ENCODE measurements at regions of chr17 and their contacts with region 1.

Region 1: GRCh38 chr17:78421484-78422266 is 43.2 kb downstream of the PGS1 start:
- DNase-seq: peak; percentile 14
- H3K4me3 ChIP-seq: no peak overlapping the region
- CTCF ChIP-seq: peak; percentile 99

Region 2: DNA sequence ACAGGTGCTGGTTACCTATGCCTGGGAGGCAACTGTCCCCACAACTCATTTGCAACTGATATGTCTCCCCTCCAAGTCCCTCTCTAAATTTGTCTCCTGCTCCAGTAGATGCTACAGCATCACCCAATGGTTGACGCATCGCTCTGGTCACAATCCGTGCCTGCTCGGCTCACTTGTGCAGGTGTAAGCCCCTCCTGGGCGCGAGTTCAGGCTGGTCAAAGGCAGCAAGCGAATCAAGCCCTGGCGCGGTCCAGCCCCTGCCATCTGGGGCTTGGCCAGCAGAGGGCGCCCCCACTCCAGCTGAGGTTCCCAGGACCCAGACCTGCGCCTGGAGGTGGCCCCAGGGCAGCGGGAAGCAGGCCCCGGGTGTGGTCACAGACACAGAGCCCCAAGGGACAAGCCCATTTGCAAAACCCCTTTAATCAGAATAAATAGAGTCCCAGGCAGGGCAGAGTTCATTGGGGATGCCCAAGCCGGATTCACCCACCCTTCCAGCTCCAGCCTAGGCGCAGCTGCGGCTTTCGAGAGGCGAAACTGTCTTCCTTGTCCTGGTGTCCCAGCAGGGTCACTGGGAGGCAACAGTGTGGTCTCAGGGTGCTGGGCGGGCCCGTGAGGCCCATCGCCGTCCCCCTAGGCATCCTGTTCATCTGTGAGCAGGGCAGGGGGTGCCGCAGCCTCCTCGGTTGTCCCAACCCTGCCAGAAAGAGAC is 309.0 kb before region 1 on chr17:
- CTCF ChIA-PET with region 1: interaction called, 11 read pairs
- POLR2A ChIA-PET with region 1: no interaction called
- DNase-seq: no peak
- H3K4me3 ChIP-seq: no peak overlapping the region
- CTCF ChIP-seq: peak; percentile 99

Region 3: GRCh38 chr17:78197147-78197832 is 224.4 kb before region 1 on chr17:
- CTCF ChIA-PET with region 1: no interaction called
- POLR2A ChIA-PET with region 1: no interaction called
- DNase-seq: no peak
- H3K4me3 ChIP-seq: no peak overlapping the region
- CTCF ChIP-seq: no peak

Region 4: DNA sequence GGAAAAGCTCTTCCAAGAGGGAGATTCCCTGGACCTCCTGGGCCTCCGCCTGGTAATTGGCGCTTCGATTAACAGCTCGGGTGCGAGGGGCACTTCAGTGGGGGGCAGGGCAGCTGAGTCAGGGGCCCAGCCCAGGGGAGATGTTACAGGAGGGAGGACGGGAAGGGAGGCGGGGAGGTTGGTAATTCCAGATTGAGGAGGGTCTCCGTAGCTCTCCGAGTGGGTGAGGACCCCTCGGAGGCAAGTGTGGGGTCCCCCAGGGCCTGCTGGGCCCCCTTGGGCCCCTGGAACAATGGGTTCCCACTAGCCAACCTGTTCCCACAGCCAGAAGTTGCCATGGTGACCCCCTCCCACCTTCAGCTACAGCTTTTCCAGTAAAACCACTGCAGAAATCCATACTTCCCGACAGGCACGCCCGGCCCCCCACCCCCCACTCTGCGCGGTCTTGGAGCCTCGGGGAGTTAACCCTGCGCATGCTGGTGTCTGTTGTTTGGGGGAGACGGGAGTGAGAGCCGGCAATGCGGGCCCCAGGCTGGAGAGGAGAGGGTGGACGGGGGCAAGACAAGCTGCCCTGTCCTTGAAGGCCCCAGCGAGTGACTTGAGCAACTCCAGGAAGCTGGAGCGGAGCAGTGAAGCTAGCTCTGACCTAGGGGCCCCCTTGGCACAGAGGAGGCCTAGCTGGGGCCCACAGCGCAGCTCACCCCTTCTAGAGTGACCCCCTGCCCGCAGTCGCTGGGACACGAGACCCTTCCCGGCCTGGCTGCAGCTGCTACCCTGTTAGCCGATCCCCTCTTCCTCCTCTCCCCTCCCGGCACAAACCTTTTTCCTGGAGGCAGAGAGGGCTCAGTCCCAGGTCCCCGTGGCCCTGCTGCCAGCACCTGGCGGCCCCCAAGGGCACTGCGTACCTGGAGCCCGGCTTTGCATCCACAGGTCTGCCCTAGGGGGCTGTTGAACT is 152.4 kb before region 1 on chr17:
- CTCF ChIA-PET with region 1: interaction called, 14 read pairs
- POLR2A ChIA-PET with region 1: no interaction called
- DNase-seq: no peak
- H3K4me3 ChIP-seq: no peak overlapping the region
- CTCF ChIP-seq: no peak

Region 5: GRCh38 chr17:78378225-78379130 is 43.2 kb before region 1 on chr17 and contains the start of gene PGS1:
- CTCF ChIA-PET with region 1: interaction called, 32 read pairs
- POLR2A ChIA-PET with region 1: no interaction called
- DNase-seq: no peak
- H3K4me3 ChIP-seq: peak within 1 kb of the TSS; percentile 81
- CTCF ChIP-seq: no peak

Region 6: DNA sequence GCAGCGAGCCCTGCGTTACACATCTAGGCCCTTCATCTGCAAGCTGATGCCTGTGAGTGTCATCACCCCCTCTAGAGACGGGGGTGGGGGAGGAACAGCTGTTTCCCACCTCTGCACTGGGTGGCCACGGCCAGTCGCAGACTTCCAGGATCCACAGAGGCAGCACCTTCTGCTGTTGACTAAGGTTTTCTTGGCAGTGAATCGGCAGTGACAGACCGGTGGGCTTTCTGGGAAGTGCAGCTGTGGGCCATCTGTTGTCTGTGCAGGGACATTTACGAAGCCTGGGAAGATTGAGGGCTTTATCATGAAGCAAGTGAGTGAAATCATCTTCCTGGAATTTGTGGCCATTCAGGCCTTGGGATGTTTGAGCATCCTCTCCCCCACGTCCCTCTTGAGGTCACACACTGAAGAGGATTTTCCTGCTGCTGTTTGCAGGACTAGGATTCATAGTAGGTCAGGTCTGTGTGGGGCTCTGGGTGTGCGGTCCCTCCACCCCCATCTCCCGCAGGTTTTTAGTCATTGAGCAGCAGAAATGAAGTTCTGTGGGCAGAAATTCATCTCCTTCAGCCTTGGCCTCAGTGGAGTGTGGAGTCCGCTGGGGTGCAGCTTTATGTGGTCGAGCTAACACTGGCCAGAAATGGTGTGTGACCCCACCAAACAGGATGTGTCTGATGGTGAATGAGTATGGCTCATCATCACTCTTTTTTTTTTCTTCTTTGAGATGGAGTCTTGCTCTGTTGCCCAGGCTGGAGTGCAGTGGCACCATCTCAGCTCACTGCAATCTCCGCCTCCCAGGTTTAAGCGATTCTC is 31.2 kb before region 1 on chr17:
- CTCF ChIA-PET with region 1: interaction called, 19 read pairs
- POLR2A ChIA-PET with region 1: no interaction called
- DNase-seq: peak; percentile 96
- H3K4me3 ChIP-seq: no peak overlapping the region
- CTCF ChIP-seq: peak; percentile 11

Region 7: DNA sequence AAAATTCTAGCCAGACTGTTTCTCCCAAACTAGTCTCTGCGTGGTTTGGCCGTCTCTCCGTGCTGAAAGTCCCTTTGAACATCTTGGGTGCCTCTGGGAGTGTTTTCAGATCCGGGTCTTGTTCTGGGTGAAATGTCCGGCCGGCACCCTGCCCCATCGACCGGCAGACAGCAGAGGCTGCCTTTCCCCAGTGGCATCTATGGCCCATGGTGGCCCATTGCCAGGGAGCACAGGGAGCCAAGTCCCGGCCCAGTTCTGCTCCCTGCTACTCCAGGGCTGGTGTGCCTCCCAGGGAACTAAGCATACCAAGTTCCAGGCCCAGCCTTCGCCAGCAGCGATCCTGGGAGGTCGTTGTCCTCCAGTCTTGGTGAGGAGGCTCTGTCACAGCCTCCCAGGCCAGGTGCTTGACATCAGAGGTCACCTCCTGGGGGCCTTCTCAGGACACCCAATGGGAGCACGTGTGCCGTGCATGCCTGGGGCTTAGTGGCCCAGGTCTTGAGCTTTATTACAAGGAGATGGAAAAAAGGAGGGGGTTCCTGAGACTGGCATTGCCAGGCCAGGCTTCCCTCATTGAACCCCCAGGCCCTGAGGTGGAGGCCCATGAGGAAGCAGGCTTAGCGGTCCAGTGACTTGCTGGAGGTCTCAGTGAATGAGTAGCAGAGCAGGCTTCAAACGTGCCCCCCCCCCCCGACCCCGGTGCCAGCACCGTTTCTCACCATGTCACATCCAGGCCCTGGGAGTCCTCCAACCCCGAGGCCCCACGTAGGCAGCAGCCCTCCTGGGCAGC is 10.7 kb after region 1 on chr17:
- CTCF ChIA-PET with region 1: interaction called, 30 read pairs
- POLR2A ChIA-PET with region 1: no interaction called
- DNase-seq: no peak
- H3K4me3 ChIP-seq: no peak overlapping the region
- CTCF ChIP-seq: no peak

Region 8: DNA sequence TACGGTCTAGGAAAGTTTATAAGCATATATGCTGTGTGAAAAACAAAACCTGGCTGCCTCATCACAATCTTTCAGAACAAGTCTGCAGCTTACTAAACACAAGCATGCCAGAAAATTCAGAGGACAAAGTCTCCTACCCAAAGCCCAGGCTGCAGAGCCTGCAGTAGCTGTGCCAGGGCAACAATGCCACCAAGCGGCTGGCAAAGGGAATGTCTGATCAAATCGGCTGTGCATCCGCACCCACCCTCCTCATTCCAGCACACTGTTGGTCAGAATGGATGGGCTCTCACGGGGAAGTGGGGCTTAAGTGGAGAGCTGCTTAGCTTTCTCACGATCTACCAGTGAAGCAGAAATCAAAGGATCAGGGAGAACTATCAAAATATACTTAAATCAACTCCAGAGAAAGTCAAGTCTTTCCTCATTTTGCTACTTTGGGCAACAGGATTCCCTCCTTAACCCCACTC is 286.9 kb after region 1 on chr17:
- CTCF ChIA-PET with region 1: interaction called, 15 read pairs
- POLR2A ChIA-PET with region 1: no interaction called
- DNase-seq: peak; percentile 57
- H3K4me3 ChIP-seq: no peak overlapping the region
- CTCF ChIP-seq: peak; percentile 95

Region 9: GRCh38 chr17:78769196-78769773 is 347.6 kb after region 1 on chr17:
- CTCF ChIA-PET with region 1: no interaction called
- POLR2A ChIA-PET with region 1: no interaction called
- DNase-seq: no peak
- H3K4me3 ChIP-seq: no peak overlapping the region
- CTCF ChIP-seq: no peak